ENCODE measurements at regions of chr4 and their contacts with region 1.

Region 1: DNA sequence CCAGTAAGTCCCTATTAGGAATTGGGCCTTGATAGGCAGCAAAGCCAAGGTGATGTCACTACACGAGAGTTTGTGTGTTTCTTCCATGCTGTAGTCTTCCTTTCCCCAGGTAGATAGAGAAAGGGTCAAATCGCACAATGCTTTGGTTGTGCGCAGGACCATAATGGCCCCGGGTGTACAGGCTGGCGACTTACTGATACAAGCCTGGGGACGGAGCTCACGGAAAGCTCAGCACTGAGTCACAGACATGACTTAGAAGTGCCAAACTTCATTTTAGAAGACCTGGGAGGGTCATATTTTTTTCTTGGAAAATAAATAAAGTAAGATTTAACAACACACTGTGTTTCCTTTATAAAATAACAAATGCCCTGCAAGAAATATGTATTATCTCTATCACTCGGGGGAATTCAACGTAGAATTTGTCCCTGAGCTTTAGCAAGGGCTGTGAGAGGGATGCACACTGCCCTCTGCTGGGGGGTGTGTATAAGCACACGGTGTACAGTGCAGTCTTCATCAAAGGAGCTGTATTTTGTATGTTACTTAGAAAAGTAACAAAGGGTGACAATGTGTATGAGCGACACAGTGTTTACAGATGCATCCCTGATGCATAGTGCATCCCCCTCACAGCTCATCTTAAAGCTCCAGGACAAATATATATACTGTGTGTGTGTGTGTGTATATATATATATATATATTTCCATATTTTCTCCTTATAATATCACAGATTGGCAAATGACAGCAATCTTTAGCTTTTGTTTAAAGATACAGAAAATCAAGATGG is 254.5 kb upstream of the VEGFC start:
- DNase-seq: peak; percentile 72
- H3K4me3 ChIP-seq: no peak overlapping the region
- CTCF ChIP-seq: peak; percentile 84

Region 2: GRCh38 chr4:176383273-176384077 is 663.8 kb before region 1 on chr4:
- in situ Hi-C with region 1: loop called (anchors 10 kb)
- DNase-seq: no peak
- H3K4me3 ChIP-seq: no peak overlapping the region
- CTCF ChIP-seq: no peak

Region 3: GRCh38 chr4:176789955-176790354 is 257.3 kb before region 1 on chr4:
- in situ Hi-C with region 1: loop called (anchors 25 kb)
- DNase-seq: no peak
- H3K4me3 ChIP-seq: peak overlapping the region; percentile 81
- CTCF ChIP-seq: peak; percentile 73

Region 4: DNA sequence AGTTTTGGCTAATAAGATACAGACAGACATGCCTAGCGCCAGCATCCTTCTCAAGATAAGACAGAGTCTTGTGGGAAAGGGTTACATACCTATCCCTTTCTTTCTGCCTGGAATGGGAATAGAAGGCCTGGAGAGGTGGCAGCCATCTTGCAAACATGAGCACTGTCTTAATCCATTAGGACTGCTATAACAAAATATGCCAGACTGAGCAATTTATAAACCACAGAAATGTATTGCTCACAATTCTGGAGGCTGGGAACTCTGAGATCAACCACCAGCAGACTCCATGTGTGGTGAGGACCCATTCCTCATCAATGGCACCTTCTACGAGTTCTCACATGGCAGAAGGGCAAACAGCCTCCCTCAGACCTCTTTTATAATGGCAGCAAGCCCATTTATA is 235.9 kb after region 1 on chr4:
- in situ Hi-C with region 1: no loop called
- DNase-seq: peak; percentile 26
- H3K4me3 ChIP-seq: no peak overlapping the region
- CTCF ChIP-seq: no peak